Heart right ventricle (tissue), 16 donors: ENCODE measurements at regions of chrX and their contacts with region 1.

Region 1: DNA sequence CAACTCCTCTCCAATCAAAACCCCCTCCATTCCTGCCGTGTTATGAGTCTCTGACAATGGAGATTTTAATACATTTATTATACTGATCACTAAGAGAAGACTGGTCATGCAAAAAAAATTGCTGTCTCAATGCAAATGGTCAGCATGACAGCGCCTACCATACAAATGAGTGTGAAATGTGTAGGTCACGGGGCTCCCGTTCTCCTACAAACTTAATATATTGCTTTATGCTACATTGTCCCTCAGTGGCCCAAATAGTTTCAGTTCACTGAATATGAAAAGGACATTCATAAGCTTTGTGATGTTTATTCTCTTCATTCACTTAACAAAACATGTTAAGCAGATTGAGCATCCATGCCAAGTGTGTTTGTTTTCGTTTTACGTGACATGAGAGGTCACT is 116.1 kb downstream of the SPANXN3 start:
- DNase-seq: no peak
- ATAC-seq: no peak
- H3K4me3 ChIP-seq: no peak overlapping the region
- H3K27ac ChIP-seq: no peak overlapping the region
- H3K4me1 ChIP-seq: no peaks in the 10 kb centered on the region
- H3K27me3 ChIP-seq: no peaks in the 10 kb centered on the region
- CTCF ChIP-seq: no peak

Region 2: GRCh38 chrX:142873215-142873614 is 527.9 kb before region 1 on chrX:
- intact Hi-C with region 1: no loop called
- DNase-seq: no peak
- ATAC-seq: no peak
- H3K4me3 ChIP-seq: no peak overlapping the region
- H3K27ac ChIP-seq: no peak overlapping the region
- H3K4me1 ChIP-seq: no peaks in the 10 kb centered on the region
- H3K27me3 ChIP-seq: no peaks in the 10 kb centered on the region
- CTCF ChIP-seq: no peak

Region 3: GRCh38 chrX:142923201-142923600 is 478.0 kb before region 1 on chrX:
- intact Hi-C with region 1: loop called in 1 of 10 experiments (anchors 10 kb)
- DNase-seq: no peak
- ATAC-seq: no peak
- H3K4me3 ChIP-seq: no peak overlapping the region
- H3K27ac ChIP-seq: no peak overlapping the region
- H3K4me1 ChIP-seq: no peaks in the 10 kb centered on the region
- H3K27me3 ChIP-seq: no peaks in the 10 kb centered on the region
- CTCF ChIP-seq: no peak